ENCODE measurements at regions of chr11 and their contacts with region 1.

Region 1: DNA sequence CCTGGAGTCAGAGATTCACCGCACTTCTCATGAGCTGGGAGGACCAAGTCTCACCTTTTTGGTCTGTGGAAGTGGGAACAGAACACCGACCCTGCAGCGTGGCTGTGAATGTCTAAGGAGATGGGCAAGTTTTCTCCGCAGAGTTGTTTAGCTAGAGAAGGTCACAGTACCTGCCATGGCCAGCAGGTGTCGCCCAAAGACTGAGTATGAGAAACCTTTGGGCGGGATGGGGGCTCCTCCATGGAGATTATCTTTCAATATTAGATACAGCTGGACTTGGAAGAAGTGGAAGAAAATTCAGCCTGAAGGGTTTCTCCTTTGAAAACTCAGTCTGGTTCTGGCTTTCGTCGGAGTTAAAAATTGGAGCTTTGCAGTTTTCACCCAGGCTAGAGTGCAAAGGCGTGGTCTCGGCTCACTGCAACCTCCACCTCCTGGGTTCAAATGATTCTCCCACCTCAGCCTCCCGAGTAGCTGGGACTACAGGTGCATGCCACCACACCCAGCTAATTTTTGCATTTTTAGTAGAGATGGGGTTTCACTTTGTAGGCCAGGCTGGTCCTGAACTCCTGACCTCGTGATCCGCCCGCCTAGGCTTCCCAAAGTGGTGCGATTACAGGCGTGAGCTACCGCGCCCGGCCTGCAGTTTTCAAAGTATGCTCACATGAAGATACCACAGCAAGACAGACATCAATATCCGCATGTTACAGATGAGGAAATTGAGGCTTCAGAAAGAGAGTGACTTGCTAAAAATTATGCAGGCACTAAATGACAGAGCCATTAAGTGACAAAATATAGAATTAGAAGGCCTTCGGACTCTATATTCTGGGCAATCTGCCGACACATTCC is 10.7 kb upstream of the DSCAML1 start:
- DNase-seq: peak in 2 of 3 donors; percentile 84 to 96
- ATAC-seq: peak; percentile 68
- H3K4me3 ChIP-seq: no peak overlapping the region
- H3K4me1 ChIP-seq: peaks cover 23% of the 10 kb centered on the region
- CTCF ChIP-seq: peak; percentile 72

Region 2: GRCh38 chr11:117426269-117426685 is 381.4 kb before region 1 on chr11:
- intact Hi-C with region 1: loop called in 1 of 2 experiments (anchors 5 kb)
- DNase-seq: peak in 2 of 3 donors; percentile 74 to 78
- ATAC-seq: peak; percentile 84
- H3K4me3 ChIP-seq: no peak overlapping the region
- H3K4me1 ChIP-seq: no peaks in the 10 kb centered on the region
- CTCF ChIP-seq: peak; percentile 93

Region 3: DNA sequence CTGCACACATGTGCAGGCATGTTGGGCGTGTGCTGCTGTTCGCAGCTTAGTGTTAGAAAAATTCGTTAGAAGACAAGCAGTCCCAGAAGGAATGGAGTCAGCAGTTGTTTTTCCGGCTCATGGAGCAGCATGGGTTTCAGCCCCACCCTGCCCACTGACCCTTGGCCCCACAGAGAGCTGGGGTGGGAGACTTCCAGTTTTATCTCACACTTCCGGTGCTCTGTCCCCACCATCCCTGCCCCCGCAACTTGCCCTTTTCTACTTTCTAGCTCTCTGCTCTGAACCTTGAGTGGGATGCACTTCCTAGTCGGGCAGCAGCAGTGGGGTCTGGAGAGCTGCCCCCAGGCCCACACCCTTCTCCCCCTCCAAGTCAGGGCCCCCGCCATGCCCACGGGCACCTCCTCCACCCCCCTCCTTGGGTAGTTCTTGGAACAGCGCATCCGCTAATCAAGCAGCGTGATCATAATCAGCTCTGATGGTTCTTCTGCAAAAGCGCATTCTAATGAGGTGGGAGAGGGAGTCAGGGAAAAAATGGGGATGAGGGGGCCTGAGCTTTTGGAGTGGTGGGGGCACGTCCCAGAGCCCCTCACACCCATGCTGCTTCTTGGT is 295.7 kb before region 1 on chr11:
- intact Hi-C with region 1: no loop called
- DNase-seq: peak in 2 of 3 donors; percentile 45 to 56
- ATAC-seq: peak; percentile 48
- H3K4me3 ChIP-seq: no peak overlapping the region
- H3K4me1 ChIP-seq: peaks cover 18% of the 10 kb centered on the region
- CTCF ChIP-seq: no peak

Region 4: GRCh38 chr11:117766576-117766975 is 41.1 kb before region 1 on chr11:
- intact Hi-C with region 1: no loop called
- DNase-seq: no peak
- ATAC-seq: no peak
- H3K4me3 ChIP-seq: no peak overlapping the region
- H3K4me1 ChIP-seq: no peaks in the 10 kb centered on the region
- CTCF ChIP-seq: no peak

Region 5: GRCh38 chr11:117885777-117886176 is 78.1 kb after region 1 on chr11:
- intact Hi-C with region 1: no loop called
- DNase-seq: peak in 2 of 3 donors; percentile 42 to 46
- ATAC-seq: peak; percentile 37
- H3K4me3 ChIP-seq: no peak overlapping the region
- H3K4me1 ChIP-seq: peaks cover 4% of the 10 kb centered on the region
- CTCF ChIP-seq: no peak

Region 6: GRCh38 chr11:117985953-117986887 is 178.5 kb after region 1 on chr11 and contains the start of gene IL10RA:
- intact Hi-C with region 1: no loop called
- DNase-seq: peak; percentile 86 to 93 (median 93)
- ATAC-seq: peak; percentile 97
- H3K4me3 ChIP-seq: peak within 1 kb of the TSS; percentile 23
- H3K4me1 ChIP-seq: no peaks in the 10 kb centered on the region
- CTCF ChIP-seq: no peak
- total RNA-seq, gene IL10RA: 9.3 to 25.9 (median 12.5) TPM

Measured in mucosa of descending colon (tissue), 3 donors.